ENCODE measurements at regions of chr1 and their contacts with region 1.

Region 1: GRCh38 chr1:228664399-228664914 is 70.8 kb upstream of the RHOU start:
- DNase-seq: peak; percentile 92
- H3K4me3 Mint-ChIP-seq: no peak overlapping the region
- H3K27ac Mint-ChIP-seq: no peak overlapping the region
- H3K4me1 Mint-ChIP-seq: peaks cover 3% of the 10 kb centered on the region
- H3K27me3 Mint-ChIP-seq: peaks cover 27% of the 10 kb centered on the region

Region 2: GRCh38 chr1:229482511-229482910 is 818.1 kb after region 1 on chr1:
- intact Hi-C with region 1: loop called (anchors 1 kb)
- DNase-seq: no peak
- H3K4me3 Mint-ChIP-seq: no peak overlapping the region
- H3K27ac Mint-ChIP-seq: peak overlapping the region; percentile 12
- H3K4me1 Mint-ChIP-seq: peaks cover 7% of the 10 kb centered on the region
- H3K27me3 Mint-ChIP-seq: no peaks in the 10 kb centered on the region